Sciatic nerve (tissue), 2 donors: ENCODE measurements at regions of chr13 and their contacts with region 1.

Region 1: GRCh38 chr13:27826379-27827353 is 34.4 kb downstream of the GSX1 start:
- DNase-seq: peak; percentile 87
- ATAC-seq: peak; percentile 95

Region 2: GRCh38 chr13:27533155-27533643 is 293.5 kb before region 1 on chr13:
- intact Hi-C with region 1: loop called (anchors 10 kb)
- DNase-seq: peak; percentile 91
- ATAC-seq: peak; percentile 90

Region 3: GRCh38 chr13:27977476-27978300 is 151.0 kb after region 1 on chr13:
- intact Hi-C with region 1: loop called (anchors 5 kb)
- DNase-seq: no peak
- ATAC-seq: no peak